CD4-positive, alpha-beta memory T cell (primary cell): ENCODE measurements at regions of chr9 and their contacts with region 1.

Region 1: GRCh38 chr9:20941174-20941690 is 90.2 kb downstream of the HACD4 start:
- DNase-seq: peak; percentile 56 to 67 (median 61)
- H3K4me3 ChIP-seq: no peak overlapping the region
- H3K4me3 Mint-ChIP-seq: no peak overlapping the region
- H3K27ac ChIP-seq: no peak overlapping the region
- H3K27ac Mint-ChIP-seq: peak overlapping the region in 1 of 7 donors; percentile 77
- H3K4me1 ChIP-seq: no peaks in the 10 kb centered on the region
- H3K4me1 Mint-ChIP-seq: peaks cover 0 to 5% (median 3%) of the 10 kb centered on the region in 4 donors
- H3K27me3 ChIP-seq: no peaks in the 10 kb centered on the region
- H3K27me3 Mint-ChIP-seq: no peaks in the 10 kb centered on the region

Region 2: DNA sequence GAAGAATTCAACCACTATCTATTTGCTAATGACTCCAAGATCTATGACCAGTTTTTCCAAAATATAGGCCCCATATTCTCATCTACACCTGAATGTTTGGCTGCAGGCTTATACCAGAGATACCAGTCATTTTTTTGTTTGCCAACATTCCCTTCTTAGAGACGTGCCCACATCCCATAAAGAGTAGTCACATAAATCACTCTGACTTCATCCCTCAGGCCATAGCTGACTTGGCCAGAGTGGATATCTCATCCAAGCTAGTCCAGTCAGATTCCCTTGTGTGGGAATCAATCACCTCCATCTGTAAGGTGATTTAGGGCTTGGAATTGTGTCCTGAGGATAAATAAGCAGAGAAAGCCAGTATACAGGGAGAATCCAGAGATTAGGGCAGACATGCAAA is 1028.1 kb before region 1 on chr9:
- CTCF ChIA-PET with region 1: no interaction called
- POLR2A ChIA-PET with region 1: no interaction called
- intact Hi-C with region 1: no loop called
- DNase-seq: no peak
- H3K4me3 ChIP-seq: no peak overlapping the region
- H3K4me3 Mint-ChIP-seq: no peak overlapping the region
- H3K27ac ChIP-seq: no peak overlapping the region
- H3K27ac Mint-ChIP-seq: no peak overlapping the region
- H3K4me1 ChIP-seq: no peaks in the 10 kb centered on the region
- H3K4me1 Mint-ChIP-seq: no peaks in the 10 kb centered on the region
- H3K27me3 ChIP-seq: no peaks in the 10 kb centered on the region
- H3K27me3 Mint-ChIP-seq: peaks cover 1% of the 10 kb centered on the region in 2 donors

Region 3: DNA sequence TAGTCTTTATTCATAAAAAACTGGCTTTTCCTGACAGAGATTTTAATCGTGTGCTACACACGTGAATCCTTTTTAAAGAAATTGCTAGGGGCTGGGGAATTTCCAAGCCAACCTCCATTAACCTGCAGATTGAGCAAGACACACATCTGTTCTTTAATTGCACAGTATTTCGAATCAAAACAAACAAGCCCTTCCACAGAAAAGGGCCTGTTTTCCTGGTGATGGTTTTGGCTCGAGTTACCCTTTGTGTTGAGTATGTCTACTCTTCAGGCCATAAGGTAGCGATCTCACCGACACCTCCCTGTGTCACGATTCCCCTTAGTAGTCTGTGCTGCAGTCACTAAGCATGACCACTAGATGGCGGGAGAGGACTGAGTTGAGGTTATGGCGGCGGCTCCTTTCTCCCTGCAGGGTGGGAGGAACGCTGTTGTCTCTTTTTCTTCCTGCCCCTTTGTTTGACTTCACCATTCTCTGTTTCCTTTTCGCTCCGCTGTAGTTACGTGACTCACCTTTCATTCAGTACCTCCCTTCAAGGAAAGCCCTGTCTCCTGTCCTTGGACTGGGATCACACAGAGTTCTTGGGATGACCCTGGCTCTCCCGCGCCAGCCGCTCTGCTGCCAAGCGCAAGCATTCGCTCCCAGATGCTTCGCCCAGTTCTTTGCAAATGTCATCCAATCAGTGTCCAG is 1015.3 kb before region 1 on chr9:
- CTCF ChIA-PET with region 1: interaction called, 97 read pairs
- POLR2A ChIA-PET with region 1: interaction called, 5 read pairs
- intact Hi-C with region 1: loop called (anchors 1 kb)
- DNase-seq: peak; percentile 77 to 82 (median 79)
- H3K4me3 ChIP-seq: peak overlapping the region in 1 of 2 donors; percentile 27
- H3K4me3 Mint-ChIP-seq: peak overlapping the region; percentile 60 to 81 (median 76)
- H3K27ac ChIP-seq: no peak overlapping the region
- H3K27ac Mint-ChIP-seq: peak overlapping the region in 1 of 7 donors; percentile 21
- H3K4me1 ChIP-seq: peaks cover 8% of the 10 kb centered on the region
- H3K4me1 Mint-ChIP-seq: peaks cover 0 to 7% (median 5%) of the 10 kb centered on the region in 4 donors
- H3K27me3 ChIP-seq: no peaks in the 10 kb centered on the region
- H3K27me3 Mint-ChIP-seq: peaks cover 0 to 10% of the 10 kb centered on the region in 2 donors

Region 4: GRCh38 chr9:20191228-20191840 is 749.9 kb before region 1 on chr9:
- CTCF ChIA-PET with region 1: interaction called, 7 read pairs
- POLR2A ChIA-PET with region 1: no interaction called
- intact Hi-C with region 1: loop called (anchors 1 kb)
- DNase-seq: no peak
- H3K4me3 ChIP-seq: no peak overlapping the region
- H3K4me3 Mint-ChIP-seq: no peak overlapping the region
- H3K27ac ChIP-seq: no peak overlapping the region
- H3K27ac Mint-ChIP-seq: peak overlapping the region in 1 of 7 donors; percentile 20
- H3K4me1 ChIP-seq: no peaks in the 10 kb centered on the region
- H3K4me1 Mint-ChIP-seq: no peaks in the 10 kb centered on the region
- H3K27me3 ChIP-seq: no peaks in the 10 kb centered on the region
- H3K27me3 Mint-ChIP-seq: no peaks in the 10 kb centered on the region

Region 5: GRCh38 chr9:20552874-20553575 is 388.2 kb before region 1 on chr9:
- CTCF ChIA-PET with region 1: interaction called, 5 read pairs
- POLR2A ChIA-PET with region 1: no interaction called
- intact Hi-C with region 1: loop called (anchors 1 kb)
- DNase-seq: peak in 2 of 5 donors; percentile 5 to 16
- H3K4me3 ChIP-seq: no peak overlapping the region
- H3K4me3 Mint-ChIP-seq: peak overlapping the region in 7 of 8 donors; percentile 0 to 48 (median 26)
- H3K27ac ChIP-seq: no peak overlapping the region
- H3K27ac Mint-ChIP-seq: peak overlapping the region in 4 of 7 donors; percentile 2 to 17 (median 6)
- H3K4me1 ChIP-seq: peaks cover 56% of the 10 kb centered on the region
- H3K4me1 Mint-ChIP-seq: peaks cover 54 to 72% (median 65%) of the 10 kb centered on the region in 4 donors
- H3K27me3 ChIP-seq: no peaks in the 10 kb centered on the region
- H3K27me3 Mint-ChIP-seq: no peaks in the 10 kb centered on the region

Region 6: GRCh38 chr9:20649381-20649780 is 291.9 kb before region 1 on chr9:
- CTCF ChIA-PET with region 1: no interaction called
- POLR2A ChIA-PET with region 1: no interaction called
- intact Hi-C with region 1: no loop called
- DNase-seq: no peak
- H3K4me3 ChIP-seq: no peak overlapping the region
- H3K4me3 Mint-ChIP-seq: no peak overlapping the region
- H3K27ac ChIP-seq: no peak overlapping the region
- H3K27ac Mint-ChIP-seq: no peak overlapping the region
- H3K4me1 ChIP-seq: no peaks in the 10 kb centered on the region
- H3K4me1 Mint-ChIP-seq: no peaks in the 10 kb centered on the region
- H3K27me3 ChIP-seq: no peaks in the 10 kb centered on the region
- H3K27me3 Mint-ChIP-seq: peaks cover 3 to 4% of the 10 kb centered on the region in 2 donors

Region 7: DNA sequence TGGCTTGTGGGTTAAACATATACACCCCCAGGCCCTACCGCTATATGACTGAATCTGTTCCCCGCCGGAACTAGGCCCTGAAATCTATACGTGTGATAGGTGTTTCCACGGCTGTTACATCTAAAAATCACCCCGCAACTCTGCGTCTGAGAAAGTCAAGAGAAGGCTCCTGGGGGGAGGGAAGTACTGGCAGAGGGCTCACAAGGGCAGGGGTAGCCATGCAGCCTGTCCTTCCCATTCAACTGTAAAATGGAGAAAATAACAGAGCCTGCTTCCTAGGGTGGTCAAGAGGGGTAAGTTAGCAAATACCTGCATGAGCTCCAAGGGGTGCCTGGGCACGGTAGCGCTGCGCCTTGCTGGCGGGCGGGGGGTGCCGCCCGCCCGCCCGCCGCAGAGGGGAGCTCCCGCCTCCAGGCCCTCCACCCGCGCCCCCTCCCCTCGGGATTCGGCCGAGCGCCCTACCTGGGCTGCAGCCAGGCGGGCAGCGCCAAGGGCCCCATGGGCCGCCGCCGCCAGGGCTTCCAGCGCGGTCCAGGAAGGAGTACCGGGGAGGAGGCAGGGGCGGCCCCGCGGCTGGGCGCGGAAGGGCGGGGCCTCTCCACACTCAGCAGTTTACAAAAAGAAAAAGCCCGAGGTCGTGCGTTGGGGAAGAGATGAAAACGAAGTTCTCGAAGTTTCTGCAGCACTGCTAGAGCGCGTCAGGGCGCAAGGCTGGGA is 90.0 kb after region 1 on chr9 and contains the start of gene HACD4:
- CTCF ChIA-PET with region 1: interaction called, 7 read pairs
- POLR2A ChIA-PET with region 1: no interaction called
- intact Hi-C with region 1: loop called (anchors 5 kb)
- DNase-seq: peak; percentile 69 to 77 (median 74)
- H3K4me3 ChIP-seq: peak within 1 kb of the TSS; percentile 74 to 85
- H3K4me3 Mint-ChIP-seq: peak within 1 kb of the TSS in 6 of 8 donors; percentile 79 to 85 (median 81)
- H3K27ac ChIP-seq: peak within 1 kb of the TSS; percentile 64
- H3K27ac Mint-ChIP-seq: peak within 1 kb of the TSS in 6 of 7 donors; percentile 76 to 93 (median 86)
- H3K4me1 ChIP-seq: peaks cover 44% of the 10 kb centered on the region
- H3K4me1 Mint-ChIP-seq: peaks cover 21 to 33% (median 27%) of the 10 kb centered on the region in 4 donors
- H3K27me3 ChIP-seq: no peaks in the 10 kb centered on the region
- H3K27me3 Mint-ChIP-seq: no peaks in the 10 kb centered on the region
- total RNA-seq, gene HACD4: 16.0 to 18.3 TPM

Region 8: DNA sequence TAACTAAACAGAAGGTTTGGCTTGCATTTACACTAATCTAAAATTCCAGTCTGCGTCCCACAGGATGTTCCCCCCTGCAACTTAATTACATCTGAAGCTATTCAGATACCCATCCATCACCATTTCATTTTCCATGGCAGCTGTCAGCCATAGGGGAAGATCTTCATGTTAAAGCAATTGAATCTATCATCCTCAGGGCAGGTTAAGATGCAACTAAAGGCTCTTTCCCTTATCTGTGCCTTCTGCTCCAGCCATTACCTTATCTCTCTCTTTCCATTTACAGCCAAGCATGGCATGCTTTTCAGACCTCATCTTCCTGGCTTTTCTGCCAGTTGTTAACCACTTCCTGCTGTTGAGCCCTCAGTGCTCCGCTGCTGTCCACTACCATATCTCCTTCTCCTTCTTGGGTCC is 106.1 kb after region 1 on chr9:
- CTCF ChIA-PET with region 1: no interaction called
- POLR2A ChIA-PET with region 1: no interaction called
- intact Hi-C with region 1: no loop called
- DNase-seq: no peak
- H3K4me3 ChIP-seq: no peak overlapping the region
- H3K4me3 Mint-ChIP-seq: no peak overlapping the region
- H3K27ac ChIP-seq: no peak overlapping the region
- H3K27ac Mint-ChIP-seq: peak overlapping the region in 1 of 7 donors; percentile 61
- H3K4me1 ChIP-seq: no peaks in the 10 kb centered on the region
- H3K4me1 Mint-ChIP-seq: peaks cover 0 to 4% (median 0%) of the 10 kb centered on the region in 4 donors
- H3K27me3 ChIP-seq: no peaks in the 10 kb centered on the region
- H3K27me3 Mint-ChIP-seq: peaks cover 0 to 2% of the 10 kb centered on the region in 2 donors

Region 9: DNA sequence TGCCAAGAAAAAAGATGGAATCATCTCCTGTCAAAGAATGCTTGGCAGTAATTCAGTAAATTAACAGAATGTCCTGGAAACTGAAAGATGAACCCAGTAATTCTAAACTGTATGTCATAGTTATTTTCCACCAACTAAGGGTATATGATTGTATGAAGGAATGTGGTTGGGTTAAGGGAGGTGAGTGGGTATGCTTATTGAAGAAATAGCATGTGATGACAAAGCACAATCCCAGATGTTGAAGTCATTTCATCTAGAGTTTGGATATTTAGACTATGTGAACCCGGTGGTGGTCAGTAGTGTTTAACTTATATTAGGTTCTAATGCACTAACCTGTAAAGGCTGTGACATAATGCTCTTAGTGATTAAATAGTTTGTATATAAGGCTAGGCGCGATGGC is 965.6 kb after region 1 on chr9:
- CTCF ChIA-PET with region 1: no interaction called
- POLR2A ChIA-PET with region 1: no interaction called
- intact Hi-C with region 1: no loop called
- DNase-seq: no peak
- H3K4me3 ChIP-seq: no peak overlapping the region
- H3K4me3 Mint-ChIP-seq: no peak overlapping the region
- H3K27ac ChIP-seq: no peak overlapping the region
- H3K27ac Mint-ChIP-seq: no peak overlapping the region
- H3K4me1 ChIP-seq: no peaks in the 10 kb centered on the region
- H3K4me1 Mint-ChIP-seq: no peaks in the 10 kb centered on the region
- H3K27me3 ChIP-seq: no peaks in the 10 kb centered on the region
- H3K27me3 Mint-ChIP-seq: no peaks in the 10 kb centered on the region